GM10248 (cell line): ENCODE measurements at regions of chr16 and their contacts with region 1.

Region 1: GRCh38 chr16:11556945-11557720 is 29.6 kb downstream of the LITAF start:
- DNase-seq: no peak
- CTCF ChIP-seq: no peak

Region 2: DNA sequence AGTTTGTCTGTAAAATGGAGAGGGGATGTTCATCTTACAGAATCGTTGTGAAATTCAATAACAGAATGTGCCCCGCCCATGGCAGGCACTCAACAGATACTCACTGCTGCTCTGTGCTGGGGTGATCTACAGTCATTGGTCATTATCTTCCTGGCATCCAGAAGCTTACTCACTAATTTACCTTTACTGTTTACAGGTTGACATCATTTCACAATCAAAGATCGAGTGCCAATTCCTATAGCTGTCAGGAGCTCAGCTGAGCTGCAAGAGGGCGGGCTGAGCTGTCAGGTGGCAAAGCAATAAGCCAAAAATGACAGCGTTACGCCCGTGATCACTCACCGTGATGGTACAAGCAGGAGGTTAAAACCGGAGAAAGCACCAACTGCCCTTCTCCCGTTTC is 21.7 kb before region 1 on chr16:
- CTCF ChIA-PET with region 1: interaction called, 26 read pairs
- POLR2A ChIA-PET with region 1: no interaction called
- DNase-seq: no peak
- CTCF ChIP-seq: no peak

Region 3: GRCh38 chr16:11604783-11605558 is 47.8 kb after region 1 on chr16:
- CTCF ChIA-PET with region 1: no interaction called
- POLR2A ChIA-PET with region 1: no interaction called
- DNase-seq: no peak
- CTCF ChIP-seq: no peak